Activated CD4-positive, alpha-beta T cell treated with anti-CD3 and anti-CD28 coated beads for 36 hours (primary cell): ENCODE measurements at regions of chr3 and their contacts with region 1.

Region 1: GRCh38 chr3:195850857-195851543 is 39.3 kb upstream of the MUC4 start:
- DNase-seq: peak; percentile 94
- ATAC-seq: peak; percentile 99
- H3K4me3 Mint-ChIP-seq: peak overlapping the region; percentile 10
- H3K27ac Mint-ChIP-seq: no peak overlapping the region
- H3K4me1 Mint-ChIP-seq: peaks cover 9% of the 10 kb centered on the region
- H3K27me3 Mint-ChIP-seq: peaks cover 2% of the 10 kb centered on the region

Region 2: GRCh38 chr3:195716865-195717210 is 134.2 kb before region 1 on chr3:
- CTCF ChIA-PET with region 1: interaction called, 4 read pairs
- POLR2A ChIA-PET with region 1: no interaction called
- intact Hi-C with region 1: loop called in 1 of 2 experiments (anchors 5 kb)
- DNase-seq: no peak
- ATAC-seq: no peak
- H3K4me3 Mint-ChIP-seq: no peak overlapping the region
- H3K27ac Mint-ChIP-seq: no peak overlapping the region
- H3K4me1 Mint-ChIP-seq: peaks cover 6% of the 10 kb centered on the region
- H3K27me3 Mint-ChIP-seq: no peaks in the 10 kb centered on the region

Region 3: GRCh38 chr3:195863121-195864006 is 12.4 kb after region 1 on chr3:
- CTCF ChIA-PET with region 1: interaction called, 16 read pairs
- POLR2A ChIA-PET with region 1: no interaction called
- intact Hi-C with region 1: no loop called
- DNase-seq: peak; percentile 88
- ATAC-seq: peak; percentile 88
- H3K4me3 Mint-ChIP-seq: no peak overlapping the region
- H3K27ac Mint-ChIP-seq: no peak overlapping the region
- H3K4me1 Mint-ChIP-seq: peaks cover 10% of the 10 kb centered on the region
- H3K27me3 Mint-ChIP-seq: no peaks in the 10 kb centered on the region

Region 4: DNA sequence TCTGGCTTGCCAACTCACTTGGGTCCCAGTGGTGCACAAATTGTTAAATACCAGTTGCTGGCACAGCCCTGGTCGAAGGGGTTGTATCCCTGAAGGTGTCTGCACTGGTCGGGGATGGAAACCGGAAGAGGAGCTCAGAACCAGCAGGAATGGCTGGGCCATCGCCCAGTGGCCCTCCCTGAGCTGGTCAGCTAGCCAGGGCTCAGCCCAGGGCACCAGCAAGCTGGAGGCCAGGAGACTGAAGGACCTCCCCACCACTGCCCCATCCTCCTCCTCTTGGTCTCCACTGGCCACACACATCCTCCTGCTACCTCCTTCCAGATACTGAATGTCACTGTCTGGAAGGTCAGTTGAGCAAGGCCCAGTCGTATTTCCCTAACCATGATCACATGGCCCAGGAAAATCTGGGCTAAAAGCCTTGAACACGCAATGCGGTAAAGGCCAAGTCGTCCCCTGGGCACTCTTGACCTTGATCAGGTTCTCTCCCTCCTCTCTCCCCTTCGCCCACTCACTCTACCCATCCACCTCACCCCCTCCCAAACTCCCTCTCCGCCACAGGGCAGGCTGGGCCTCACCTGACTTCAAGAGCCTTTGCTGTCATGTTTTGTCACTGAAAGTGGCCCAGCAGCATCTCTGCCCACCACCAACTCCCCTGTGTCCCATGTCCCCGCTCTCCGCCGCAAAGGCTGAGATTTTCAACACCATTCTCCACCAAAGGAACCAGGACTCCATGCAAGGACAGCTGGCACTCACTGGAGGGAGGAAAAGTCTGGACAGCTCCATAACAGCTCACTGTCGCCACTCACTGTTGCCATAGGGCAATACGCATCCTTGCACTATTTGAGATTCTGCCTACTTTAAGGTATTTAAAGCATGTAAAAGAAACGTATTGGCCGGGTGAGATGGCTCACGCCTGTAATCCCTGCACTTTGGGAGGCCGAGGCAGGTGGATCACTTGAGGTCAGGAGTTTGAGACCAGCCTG is 348.1 kb after region 1 on chr3:
- CTCF ChIA-PET with region 1: no interaction called
- POLR2A ChIA-PET with region 1: no interaction called
- intact Hi-C with region 1: loop called in 1 of 2 experiments (anchors 1 kb)
- DNase-seq: no peak
- ATAC-seq: no peak
- H3K4me3 Mint-ChIP-seq: no peak overlapping the region
- H3K27ac Mint-ChIP-seq: no peak overlapping the region
- H3K4me1 Mint-ChIP-seq: peaks cover 7% of the 10 kb centered on the region
- H3K27me3 Mint-ChIP-seq: no peaks in the 10 kb centered on the region